Psoas muscle (tissue), 8 donors: ENCODE measurements at regions of chr9 and their contacts with region 1.

Region 1: GRCh38 chr9:95852059-95853032 is 23.1 kb upstream of the ERCC6L2 start:
- DNase-seq: no peak
- ATAC-seq: no peak
- H3K4me3 ChIP-seq: no peak overlapping the region
- H3K27ac ChIP-seq: no peak overlapping the region
- H3K4me1 ChIP-seq: no peaks in the 10 kb centered on the region
- H3K27me3 ChIP-seq: no peaks in the 10 kb centered on the region
- CTCF ChIP-seq: no peak

Region 2: GRCh38 chr9:95744321-95744720 is 108.0 kb before region 1 on chr9:
- intact Hi-C with region 1: loop called in 1 of 2 experiments (anchors 10 kb)
- DNase-seq: no peak
- ATAC-seq: no peak
- H3K4me3 ChIP-seq: no peak overlapping the region
- H3K27ac ChIP-seq: no peak overlapping the region
- H3K4me1 ChIP-seq: no peaks in the 10 kb centered on the region
- H3K27me3 ChIP-seq: no peaks in the 10 kb centered on the region
- CTCF ChIP-seq: no peak